ENCODE measurements at regions of chr9 and their contacts with region 1.

Region 1: GRCh38 chr9:12723409-12724028 is 30.3 kb downstream of the TYRP1 start:
- DNase-seq: no peak

Region 2: GRCh38 chr9:12819436-12820185 is 96.1 kb after region 1 on chr9:
- intact Hi-C with region 1: loop called (anchors 10 kb)
- DNase-seq: no peak

Region 3: DNA sequence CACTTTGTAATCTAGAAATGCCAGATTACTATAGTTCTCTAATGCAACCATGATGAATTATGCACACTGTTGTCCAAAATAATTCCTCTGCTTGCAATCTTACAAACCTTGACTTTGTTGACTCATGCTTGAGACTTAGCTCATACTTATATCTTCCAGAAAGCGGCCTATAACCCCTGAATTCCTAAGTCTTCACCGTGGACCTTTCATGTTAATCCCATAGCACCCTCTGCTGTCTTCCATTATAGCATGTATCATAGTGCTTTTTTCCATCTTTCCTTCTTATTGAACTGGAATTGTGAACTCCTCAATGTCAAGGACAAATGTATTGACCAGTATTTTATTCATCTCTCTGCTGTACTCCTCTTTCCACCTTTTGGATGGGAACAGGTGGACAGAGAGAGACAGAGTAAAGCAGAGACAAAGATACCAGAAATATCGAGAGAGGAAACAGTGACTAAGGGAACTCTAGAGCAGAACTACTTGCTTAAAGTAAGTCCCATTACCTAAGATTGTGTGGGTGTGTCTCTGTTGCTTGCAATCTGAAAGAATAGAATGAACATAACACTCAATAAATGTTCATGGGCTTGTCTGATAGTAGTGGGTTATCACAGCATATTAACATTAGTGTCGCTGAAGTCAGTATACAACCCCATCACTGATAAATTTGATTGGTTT is 161.4 kb after region 1 on chr9:
- intact Hi-C with region 1: loop called (anchors 2 kb)
- DNase-seq: no peak

Region 4: DNA sequence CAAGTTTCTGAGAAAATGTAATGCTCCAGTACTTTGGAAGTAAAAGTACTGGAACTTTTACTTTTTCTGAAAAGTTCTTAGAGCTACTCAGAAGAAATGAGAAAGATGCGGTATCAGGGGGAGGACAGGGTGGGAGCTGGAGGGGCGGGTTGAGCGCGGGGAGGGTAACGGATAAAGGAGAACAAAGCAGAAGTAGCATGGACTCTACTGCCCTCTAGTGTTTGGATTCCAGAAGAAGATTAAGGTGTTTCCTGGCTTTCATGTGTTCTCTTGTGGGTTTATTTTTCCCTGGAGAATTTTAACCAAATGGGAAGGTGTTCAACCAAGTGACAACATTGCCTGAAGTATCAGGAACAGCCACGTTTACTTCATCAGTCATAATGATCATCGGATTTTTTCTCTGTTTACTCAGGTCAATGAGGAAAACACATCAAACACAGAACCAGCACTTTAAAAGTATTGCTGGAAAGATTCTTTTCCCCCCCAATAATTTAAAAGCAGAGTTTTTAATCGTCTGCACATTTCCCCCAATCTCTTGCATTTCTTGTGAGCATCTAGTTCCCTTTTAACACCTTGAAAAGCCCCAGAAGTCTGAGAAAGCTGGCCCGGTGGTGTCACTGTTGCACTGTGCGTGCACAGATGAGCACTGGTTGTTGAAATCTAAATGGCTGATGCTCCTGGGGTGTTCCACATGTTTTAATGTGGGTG is 365.4 kb after region 1 on chr9:
- intact Hi-C with region 1: loop called (anchors 5 kb)
- DNase-seq: no peak

Measured in cardiac septum (tissue), 1 donor.